ENCODE measurements at regions of chrX and their contacts with region 1.

Region 1: DNA sequence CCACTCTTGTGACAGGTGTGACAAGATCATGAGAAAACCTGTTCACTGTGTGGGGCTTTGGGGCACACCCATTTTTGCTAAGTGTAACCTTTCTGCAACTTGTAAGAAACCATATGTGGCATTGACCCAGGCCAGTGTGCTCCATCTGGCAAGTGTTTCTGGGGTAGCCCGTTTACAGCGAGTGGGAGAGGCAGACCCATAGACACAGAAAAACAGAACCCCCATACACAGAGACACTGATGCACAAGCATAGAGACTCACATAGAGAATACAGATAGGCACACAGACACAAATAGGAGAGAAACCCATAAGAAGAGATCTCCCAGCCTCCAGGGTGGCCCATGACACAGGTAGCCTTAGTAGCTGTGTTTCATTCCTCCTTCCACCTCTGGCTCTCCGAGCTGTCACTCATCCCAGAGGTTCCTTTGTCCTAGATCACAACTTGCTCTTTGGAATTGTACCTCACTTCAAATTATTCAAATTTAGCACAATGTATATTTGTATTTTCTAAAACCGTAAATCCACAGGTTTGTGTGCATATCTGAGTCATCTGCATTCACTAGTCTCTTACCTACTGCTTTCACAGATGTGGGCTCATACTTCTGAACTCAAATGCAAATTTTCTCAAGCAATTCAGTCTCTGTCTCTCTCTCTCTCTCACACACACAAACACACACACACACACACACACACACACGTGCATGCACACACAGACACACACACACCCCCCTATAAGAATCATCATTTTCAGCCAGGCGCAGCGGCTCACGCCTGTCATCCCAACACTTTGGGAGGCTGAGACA is 114.4 kb downstream of the SH3KBP1 start:
- DNase-seq: peak in 1 of 2 donors; percentile 37
- ATAC-seq: peak; percentile 24 to 35 (median 27)
- H3K4me3 ChIP-seq: no peak overlapping the region
- H3K4me3 Mint-ChIP-seq: peak overlapping the region; percentile 81
- H3K27ac ChIP-seq: peak overlapping the region; percentile 61
- H3K27ac Mint-ChIP-seq: peak overlapping the region; percentile 69 to 89
- H3K4me1 ChIP-seq: peaks cover 38% of the 10 kb centered on the region
- H3K4me1 Mint-ChIP-seq: peaks cover 52 to 64% of the 10 kb centered on the region in 2 donors
- H3K27me3 ChIP-seq: no peaks in the 10 kb centered on the region
- H3K27me3 Mint-ChIP-seq: no peaks in the 10 kb centered on the region
- CTCF ChIP-seq: no peak

Region 2: GRCh38 chrX:19811807-19812604 is 39.0 kb after region 1 on chrX:
- intact Hi-C with region 1: loop called (anchors 5 kb)
- DNase-seq: no peak
- ATAC-seq: peak in 2 of 3 donors; percentile 39 to 45
- H3K4me3 ChIP-seq: no peak overlapping the region
- H3K4me3 Mint-ChIP-seq: peak overlapping the region; percentile 68
- H3K27ac ChIP-seq: peak overlapping the region; percentile 63
- H3K27ac Mint-ChIP-seq: peak overlapping the region; percentile 82 to 88
- H3K4me1 ChIP-seq: peaks cover 55% of the 10 kb centered on the region
- H3K4me1 Mint-ChIP-seq: peaks cover 55 to 66% of the 10 kb centered on the region in 2 donors
- H3K27me3 ChIP-seq: no peaks in the 10 kb centered on the region
- H3K27me3 Mint-ChIP-seq: no peaks in the 10 kb centered on the region
- CTCF ChIP-seq: no peak

Region 3: GRCh38 chrX:20829665-20830491 is 1056.9 kb after region 1 on chrX:
- intact Hi-C with region 1: no loop called
- DNase-seq: no peak
- ATAC-seq: no peak
- H3K4me3 ChIP-seq: no peak overlapping the region
- H3K4me3 Mint-ChIP-seq: no peak overlapping the region
- H3K27ac ChIP-seq: no peak overlapping the region
- H3K27ac Mint-ChIP-seq: no peak overlapping the region
- H3K4me1 ChIP-seq: no peaks in the 10 kb centered on the region
- H3K4me1 Mint-ChIP-seq: no peaks in the 10 kb centered on the region
- H3K27me3 ChIP-seq: no peaks in the 10 kb centered on the region
- H3K27me3 Mint-ChIP-seq: no peaks in the 10 kb centered on the region
- CTCF ChIP-seq: no peak